Heart right ventricle (tissue), 16 donors: ENCODE measurements at regions of chr11 and their contacts with region 1.

Region 1: GRCh38 chr11:61733120-61733978 is 19.1 kb upstream of the MYRF start:
- DNase-seq: peak; percentile 84 to 88
- ATAC-seq: peak; percentile 71 to 94 (median 88)
- H3K4me3 ChIP-seq: no peak overlapping the region
- H3K27ac ChIP-seq: peak overlapping the region in 5 of 10 donors; percentile 0 to 50 (median 16)
- H3K4me1 ChIP-seq: peaks cover 0 to 27% (median 7%) of the 10 kb centered on the region in 9 donors
- H3K27me3 ChIP-seq: no peaks in the 10 kb centered on the region
- CTCF ChIP-seq: peak; percentile 98 to 100 (median 99)

Region 2: GRCh38 chr11:61679893-61680621 is 53.3 kb before region 1 on chr11 and contains the start of gene DAGLA:
- intact Hi-C with region 1: loop called (anchors 1 to 2 kb)
- DNase-seq: peak; percentile 54 to 82
- ATAC-seq: peak; percentile 47 to 86 (median 74)
- H3K4me3 ChIP-seq: peak within 1 kb of the TSS in 9 of 10 donors; percentile 42 to 63 (median 57)
- H3K27ac ChIP-seq: peak within 1 kb of the TSS in 5 of 10 donors; percentile 44 to 79 (median 50)
- H3K4me1 ChIP-seq: peaks cover 4 to 49% (median 35%) of the 10 kb centered on the region in 9 donors
- H3K27me3 ChIP-seq: peaks cover 0 to 28% (median 0%) of the 10 kb centered on the region in 7 donors
- CTCF ChIP-seq: peak; percentile 92 to 100 (median 97)
- total RNA-seq, gene DAGLA: 1.8 to 5.0 (median 3.4) TPM

Region 3: GRCh38 chr11:61695917-61696316 is 37.4 kb before region 1 on chr11:
- intact Hi-C with region 1: loop called in 1 of 10 experiments (anchors 5 kb)
- DNase-seq: peak; percentile 74 to 82
- ATAC-seq: peak; percentile 64 to 81 (median 78)
- H3K4me3 ChIP-seq: peak overlapping the region in 8 of 10 donors; percentile 1 to 42 (median 32)
- H3K27ac ChIP-seq: peak overlapping the region; percentile 27 to 92 (median 78)
- H3K4me1 ChIP-seq: peaks cover 25 to 87% (median 76%) of the 10 kb centered on the region in 9 donors
- H3K27me3 ChIP-seq: no peaks in the 10 kb centered on the region
- CTCF ChIP-seq: peak in 4 of 9 donors; percentile 11 to 27 (median 24)

Region 4: GRCh38 chr11:61803889-61804647 is 70.7 kb after region 1 on chr11:
- intact Hi-C with region 1: no loop called
- DNase-seq: no peak
- ATAC-seq: no peak
- H3K4me3 ChIP-seq: no peak overlapping the region
- H3K27ac ChIP-seq: no peak overlapping the region
- H3K4me1 ChIP-seq: peaks cover 0 to 9% (median 0%) of the 10 kb centered on the region in 9 donors
- H3K27me3 ChIP-seq: no peaks in the 10 kb centered on the region
- CTCF ChIP-seq: no peak